Naive thymus-derived CD4-positive, alpha-beta T cell (primary cell): ENCODE measurements at regions of chr11 and their contacts with region 1.

Region 1: DNA sequence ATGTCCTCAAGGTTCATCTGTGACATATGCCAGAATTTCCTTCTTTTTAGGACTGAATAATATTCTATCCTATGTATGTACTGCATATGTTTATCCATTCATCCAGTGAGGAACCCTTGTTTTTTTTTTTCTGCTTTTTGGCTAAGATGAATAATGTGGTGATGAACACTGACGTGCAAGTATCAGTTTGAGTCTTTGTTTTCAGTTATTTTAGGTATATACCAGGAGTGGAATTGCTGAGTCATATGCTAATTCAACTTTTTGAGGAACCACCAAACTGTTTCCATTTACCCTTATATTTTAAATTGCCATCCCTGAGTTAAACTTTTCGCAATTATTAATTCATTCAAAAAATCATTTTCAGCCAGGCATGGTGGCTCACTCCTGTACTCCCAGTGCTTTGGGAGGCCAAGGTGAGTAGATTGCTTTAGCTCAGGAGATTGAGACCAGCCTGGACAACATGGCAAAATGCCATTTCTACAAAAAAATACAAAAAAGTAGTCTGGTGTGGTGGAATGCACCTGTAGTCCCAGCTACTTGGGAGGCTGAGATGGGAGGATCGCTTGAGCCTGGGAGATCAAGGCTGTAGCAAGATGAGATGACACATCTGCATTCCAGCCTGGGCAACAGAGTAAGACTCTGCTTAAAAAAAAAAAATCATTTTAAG is 64.2 kb downstream of the MICAL2 start:
- DNase-seq: peak in 1 of 9 donors; percentile 26
- ATAC-seq: peak; percentile 50
- H3K4me3 ChIP-seq: no peak overlapping the region
- H3K4me3 Mint-ChIP-seq: peak overlapping the region in 1 of 10 donors; percentile 61
- H3K27ac ChIP-seq: no peak overlapping the region
- H3K27ac Mint-ChIP-seq: peak overlapping the region in 2 of 9 donors; percentile 19 to 87
- H3K4me1 ChIP-seq: peaks cover 0 to 10% of the 10 kb centered on the region in 2 donors
- H3K4me1 Mint-ChIP-seq: peaks cover 10 to 71% (median 17%) of the 10 kb centered on the region in 7 donors
- H3K27me3 ChIP-seq: no peaks in the 10 kb centered on the region
- H3K27me3 Mint-ChIP-seq: no peaks in the 10 kb centered on the region

Region 2: GRCh38 chr11:12149672-12150225 is 24.9 kb before region 1 on chr11:
- CTCF ChIA-PET with region 1: no interaction called
- POLR2A ChIA-PET with region 1: no interaction called
- intact Hi-C with region 1: loop called in 1 of 2 experiments (anchors 1 kb)
- DNase-seq: peak in 1 of 9 donors; percentile 64
- ATAC-seq: no peak
- H3K4me3 ChIP-seq: no peak overlapping the region
- H3K4me3 Mint-ChIP-seq: peak overlapping the region in 1 of 10 donors; percentile 69
- H3K27ac ChIP-seq: no peak overlapping the region
- H3K27ac Mint-ChIP-seq: peak overlapping the region in 6 of 9 donors; percentile 8 to 88 (median 38)
- H3K4me1 ChIP-seq: peaks cover 0 to 16% of the 10 kb centered on the region in 2 donors
- H3K4me1 Mint-ChIP-seq: peaks cover 17 to 80% (median 39%) of the 10 kb centered on the region in 7 donors
- H3K27me3 ChIP-seq: no peaks in the 10 kb centered on the region
- H3K27me3 Mint-ChIP-seq: no peaks in the 10 kb centered on the region

Region 3: DNA sequence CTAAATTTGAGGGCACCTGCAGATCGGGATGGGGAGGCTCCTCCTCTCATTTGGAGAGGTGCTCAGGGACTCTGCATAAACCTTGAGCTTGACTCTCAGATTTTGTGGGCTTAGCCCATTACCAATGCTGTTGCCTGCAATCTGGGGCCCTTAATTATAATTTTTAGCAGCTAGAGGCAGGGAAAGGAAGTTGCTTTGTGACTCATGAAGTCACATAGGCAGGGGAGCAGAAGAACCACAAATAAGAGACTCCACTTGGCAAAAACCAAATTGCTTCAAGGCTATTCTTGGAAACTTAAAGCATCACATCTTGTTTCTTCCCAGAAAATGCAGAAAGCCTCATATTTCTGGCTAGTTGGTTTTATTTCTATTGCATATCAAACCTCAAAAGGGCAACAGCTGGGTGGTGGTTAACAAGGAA is 17.4 kb before region 1 on chr11:
- CTCF ChIA-PET with region 1: interaction called, 3 read pairs
- POLR2A ChIA-PET with region 1: no interaction called
- intact Hi-C with region 1: loop called in 1 of 2 experiments (anchors 1 kb)
- DNase-seq: no peak
- ATAC-seq: peak; percentile 36
- H3K4me3 ChIP-seq: no peak overlapping the region
- H3K4me3 Mint-ChIP-seq: peak overlapping the region in 2 of 10 donors; percentile 23 to 51
- H3K27ac ChIP-seq: no peak overlapping the region
- H3K27ac Mint-ChIP-seq: peak overlapping the region in 5 of 9 donors; percentile 15 to 86 (median 46)
- H3K4me1 ChIP-seq: peaks cover 15% of the 10 kb centered on the region in 2 donors
- H3K4me1 Mint-ChIP-seq: peaks cover 15 to 87% (median 22%) of the 10 kb centered on the region in 7 donors
- H3K27me3 ChIP-seq: no peaks in the 10 kb centered on the region
- H3K27me3 Mint-ChIP-seq: no peaks in the 10 kb centered on the region

Region 4: DNA sequence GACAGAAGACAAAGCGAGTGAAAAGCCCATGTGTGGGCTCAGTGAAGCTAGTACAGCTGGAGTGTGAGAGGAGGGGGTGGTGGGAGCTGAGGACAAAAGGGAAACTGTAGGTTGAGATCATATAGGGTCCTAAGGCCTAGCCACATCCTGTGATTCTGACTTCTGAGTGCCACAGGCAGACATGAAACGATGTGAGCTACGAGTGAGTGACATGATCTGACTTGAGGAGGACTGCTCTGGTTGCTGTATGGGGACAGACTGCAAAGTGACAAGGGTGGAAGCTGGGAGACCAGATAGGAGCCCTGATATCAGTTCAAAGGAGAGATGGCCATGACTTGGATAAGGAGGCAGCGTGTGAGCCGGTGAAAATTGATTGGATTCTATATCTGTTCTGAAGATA is 21.2 kb after region 1 on chr11:
- CTCF ChIA-PET with region 1: no interaction called
- POLR2A ChIA-PET with region 1: interaction called, 4 read pairs
- intact Hi-C with region 1: loop called in 1 of 2 experiments (anchors 1 kb)
- DNase-seq: peak in 8 of 9 donors; percentile 55 to 77 (median 70)
- ATAC-seq: peak; percentile 83
- H3K4me3 ChIP-seq: peak overlapping the region; percentile 41
- H3K4me3 Mint-ChIP-seq: peak overlapping the region; percentile 68 to 92 (median 81)
- H3K27ac ChIP-seq: peak overlapping the region; percentile 57
- H3K27ac Mint-ChIP-seq: peak overlapping the region; percentile 91 to 97 (median 94)
- H3K4me1 ChIP-seq: peaks cover 40 to 58% of the 10 kb centered on the region in 2 donors
- H3K4me1 Mint-ChIP-seq: peaks cover 50 to 89% (median 75%) of the 10 kb centered on the region in 7 donors
- H3K27me3 ChIP-seq: no peaks in the 10 kb centered on the region
- H3K27me3 Mint-ChIP-seq: no peaks in the 10 kb centered on the region

Region 5: GRCh38 chr11:12224537-12224893 is 49.9 kb after region 1 on chr11:
- CTCF ChIA-PET with region 1: no interaction called
- POLR2A ChIA-PET with region 1: no interaction called
- intact Hi-C with region 1: loop called in 1 of 2 experiments (anchors 1 kb)
- DNase-seq: peak; percentile 55 to 86 (median 81)
- ATAC-seq: peak; percentile 97
- H3K4me3 ChIP-seq: peak overlapping the region; percentile 52
- H3K4me3 Mint-ChIP-seq: peak overlapping the region; percentile 67 to 91 (median 75)
- H3K27ac ChIP-seq: peak overlapping the region; percentile 54
- H3K27ac Mint-ChIP-seq: peak overlapping the region; percentile 87 to 97 (median 91)
- H3K4me1 ChIP-seq: peaks cover 36 to 41% of the 10 kb centered on the region in 2 donors
- H3K4me1 Mint-ChIP-seq: peaks cover 33 to 51% (median 47%) of the 10 kb centered on the region in 7 donors
- H3K27me3 ChIP-seq: no peaks in the 10 kb centered on the region
- H3K27me3 Mint-ChIP-seq: no peaks in the 10 kb centered on the region